Calu3 (cell line): ENCODE measurements at regions of chrX and their contacts with region 1.

Region 1: GRCh38 chrX:109475174-109475891 is 6.6 kb downstream of the GUCY2F start:
- DNase-seq: peak; percentile 41
- H3K4me3 Mint-ChIP-seq: no peak overlapping the region
- H3K27ac Mint-ChIP-seq: no peak overlapping the region
- H3K4me1 Mint-ChIP-seq: no peaks in the 10 kb centered on the region
- H3K27me3 Mint-ChIP-seq: peaks cover 30% of the 10 kb centered on the region
- CTCF ChIP-seq: peak; percentile 29

Region 2: DNA sequence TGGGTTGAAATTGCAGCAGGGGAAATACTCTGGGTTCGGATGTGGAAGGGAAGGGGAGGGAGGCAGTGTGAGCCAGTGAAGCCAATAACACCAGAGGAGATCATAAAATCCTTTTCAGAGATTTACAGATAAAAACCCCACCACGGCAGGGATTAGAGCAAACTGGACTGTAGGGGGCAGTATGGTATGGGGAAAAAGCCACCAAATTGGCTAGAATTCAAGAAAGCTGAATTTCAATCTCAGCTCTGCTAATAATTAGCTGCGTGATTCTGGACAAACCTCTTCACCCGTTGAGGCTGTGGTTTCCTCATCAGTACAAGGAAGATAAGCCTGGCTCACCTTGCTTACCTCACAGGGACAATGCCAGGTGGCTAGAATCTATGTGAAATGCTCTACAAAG is 1275.6 kb before region 1 on chrX:
- CTCF ChIA-PET with region 1: interaction called, 3 read pairs
- intact Hi-C with region 1: loop called (anchors 5 kb)
- DNase-seq: peak; percentile 63
- H3K4me3 Mint-ChIP-seq: no peak overlapping the region
- H3K27ac Mint-ChIP-seq: no peak overlapping the region
- H3K4me1 Mint-ChIP-seq: no peaks in the 10 kb centered on the region
- H3K27me3 Mint-ChIP-seq: peaks cover 15% of the 10 kb centered on the region
- CTCF ChIP-seq: peak; percentile 29

Region 3: GRCh38 chrX:108584617-108585211 is 890.6 kb before region 1 on chrX:
- CTCF ChIA-PET with region 1: no interaction called
- intact Hi-C with region 1: loop called (anchors 5 kb)
- DNase-seq: peak; percentile 10
- H3K4me3 Mint-ChIP-seq: no peak overlapping the region
- H3K27ac Mint-ChIP-seq: no peak overlapping the region
- H3K4me1 Mint-ChIP-seq: no peaks in the 10 kb centered on the region
- H3K27me3 Mint-ChIP-seq: no peaks in the 10 kb centered on the region
- CTCF ChIP-seq: peak; percentile 34

Region 4: DNA sequence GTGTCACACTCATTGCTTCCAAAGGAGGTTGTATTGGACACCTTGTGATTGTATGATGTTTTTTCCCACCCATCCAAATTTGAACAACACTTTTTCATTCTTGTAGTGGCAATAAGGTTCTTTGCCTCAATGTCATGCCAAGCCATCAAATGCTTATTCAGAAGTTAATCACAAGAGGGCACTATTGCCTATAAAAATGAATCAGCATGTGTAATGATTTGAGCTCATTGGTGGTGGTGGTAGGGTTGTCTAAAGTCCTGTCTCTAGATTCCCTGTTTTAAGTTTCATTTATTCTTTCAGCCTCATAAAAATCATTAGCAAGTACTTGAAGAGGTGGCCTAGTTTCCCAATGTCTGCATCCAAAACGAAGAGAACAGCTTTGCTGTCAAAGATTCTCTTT is 776.0 kb before region 1 on chrX:
- CTCF ChIA-PET with region 1: interaction called, 6 read pairs
- intact Hi-C with region 1: loop called (anchors 1 kb)
- DNase-seq: no peak
- H3K4me3 Mint-ChIP-seq: no peak overlapping the region
- H3K27ac Mint-ChIP-seq: no peak overlapping the region
- H3K4me1 Mint-ChIP-seq: no peaks in the 10 kb centered on the region
- H3K27me3 Mint-ChIP-seq: no peaks in the 10 kb centered on the region
- CTCF ChIP-seq: no peak

Region 5: DNA sequence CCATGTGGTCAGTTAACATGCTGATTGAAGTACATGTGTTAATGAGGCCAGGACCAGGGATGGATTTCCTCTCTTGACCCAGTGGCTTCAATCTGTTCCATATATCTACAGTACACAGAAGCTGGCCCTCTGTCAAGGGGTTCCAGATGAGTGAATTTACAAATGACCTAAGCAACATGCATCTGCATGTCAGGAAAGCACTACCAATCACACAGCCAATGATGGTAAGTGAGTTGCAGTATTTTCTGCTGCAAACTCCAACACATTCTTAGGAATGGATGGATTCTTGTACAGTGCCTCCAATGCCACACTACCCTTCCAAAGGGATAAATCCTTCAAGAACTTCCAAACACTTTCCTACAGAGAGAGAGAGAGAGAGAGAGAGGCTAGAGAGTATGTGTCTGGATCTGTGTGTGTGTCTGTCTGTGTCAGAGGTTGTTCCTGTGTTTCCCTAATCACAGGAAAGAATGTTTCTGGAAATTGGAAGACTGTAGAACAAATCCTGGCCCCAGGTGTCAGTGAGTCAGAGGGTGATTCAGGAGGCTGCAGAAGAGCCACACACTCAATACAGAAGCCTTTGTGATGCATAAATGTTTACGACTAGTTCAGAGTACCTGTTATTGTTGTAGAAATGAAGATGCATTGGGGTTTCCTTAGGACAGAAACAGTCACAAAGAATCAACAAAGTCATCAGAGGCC is 100.9 kb before region 1 on chrX:
- CTCF ChIA-PET with region 1: no interaction called
- intact Hi-C with region 1: no loop called
- DNase-seq: no peak
- H3K4me3 Mint-ChIP-seq: no peak overlapping the region
- H3K27ac Mint-ChIP-seq: no peak overlapping the region
- H3K4me1 Mint-ChIP-seq: no peaks in the 10 kb centered on the region
- H3K27me3 Mint-ChIP-seq: no peaks in the 10 kb centered on the region
- CTCF ChIP-seq: no peak